Tibial artery (tissue), 4 donors: ENCODE measurements at regions of chr12 and their contacts with region 1.

Region 1: DNA sequence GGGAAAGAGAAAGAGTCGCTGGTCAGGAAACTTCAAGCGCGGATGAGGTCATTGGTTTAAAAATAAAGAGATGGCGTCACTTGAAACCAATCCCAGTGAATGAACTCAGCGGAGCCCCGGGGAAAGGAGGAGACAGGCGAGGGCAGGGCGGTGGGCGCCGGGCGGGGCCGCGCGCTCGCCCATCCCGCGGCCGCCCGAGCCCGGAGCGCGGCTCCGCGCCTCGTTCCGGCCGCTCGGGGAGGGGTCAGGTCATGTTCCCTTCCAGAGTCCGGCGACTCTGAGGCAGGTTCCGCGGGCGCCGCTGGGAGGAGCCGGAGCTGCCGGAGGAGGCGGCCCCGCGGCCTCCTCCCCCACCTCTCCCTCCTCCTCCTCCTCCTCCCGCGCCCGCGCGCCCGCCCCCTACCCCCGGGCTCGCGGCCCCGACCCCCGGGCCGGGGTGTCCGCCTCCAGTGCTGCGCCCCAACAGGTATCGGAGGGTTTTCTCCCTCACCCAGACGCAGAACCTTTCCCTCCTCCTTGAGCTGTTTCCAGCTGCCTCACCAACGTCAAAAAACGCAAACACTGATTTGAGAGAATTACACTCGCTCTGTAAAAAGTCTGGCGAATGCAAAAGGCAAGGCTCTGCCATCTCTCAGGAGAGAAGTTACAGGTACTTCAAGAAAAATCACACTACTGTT is at the start of gene DUSP16:
- DNase-seq: peak; percentile 91 to 96
- H3K4me3 ChIP-seq: peak within 1 kb of the TSS; percentile 70 to 89
- H3K27ac ChIP-seq: peak within 1 kb of the TSS; percentile 98 to 100
- H3K4me1 ChIP-seq: peaks cover 0 to 42% (median 21%) of the 10 kb centered on the region in 4 donors
- H3K27me3 ChIP-seq: no peaks in the 10 kb centered on the region
- CTCF ChIP-seq: no peak

Region 2: DNA sequence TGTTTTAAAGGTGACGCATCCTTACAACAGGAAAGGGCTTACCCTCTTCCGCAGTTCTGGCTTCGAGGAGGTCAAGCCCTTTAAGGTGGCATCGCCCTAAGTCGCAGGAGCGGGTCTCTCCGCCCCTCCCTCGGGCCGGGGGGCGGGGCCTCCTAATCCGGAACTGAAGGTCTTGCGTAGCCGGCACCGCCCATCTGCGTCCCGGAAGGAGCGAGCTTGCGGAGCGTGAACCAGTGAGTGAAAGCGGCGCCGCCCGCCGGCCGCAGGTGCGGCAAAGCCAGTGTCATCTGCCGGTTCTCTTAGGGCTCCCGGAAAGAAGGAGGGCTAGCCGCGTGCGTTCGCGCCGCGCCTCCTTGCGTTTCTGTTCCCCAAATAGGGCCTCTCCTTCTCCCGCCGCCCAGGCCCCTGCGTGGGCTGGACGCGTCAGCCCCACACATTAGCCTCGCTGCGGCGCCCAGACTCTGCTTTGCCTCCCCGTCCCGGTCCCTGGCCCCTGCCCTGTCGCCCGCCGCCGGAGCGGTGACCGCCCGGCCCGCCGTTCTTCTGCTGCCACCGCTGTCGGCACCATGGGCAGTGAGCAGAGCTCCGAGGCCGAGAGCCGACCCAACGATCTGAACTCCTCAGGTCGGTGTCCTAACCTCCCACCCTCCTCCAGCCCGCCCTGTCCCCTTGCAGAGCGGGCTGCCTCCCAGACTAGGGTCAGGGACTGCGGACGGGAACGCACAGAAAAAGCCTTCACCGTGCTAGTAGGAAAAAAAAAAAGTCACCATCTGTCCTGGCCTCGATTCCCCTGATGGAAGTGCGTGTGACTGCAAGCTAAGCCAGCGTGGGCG is 205.6 kb before region 1 on chr12 and contains the start of gene BORCS5:
- intact Hi-C with region 1: loop called (anchors 5 kb)
- DNase-seq: peak; percentile 96 to 98
- H3K4me3 ChIP-seq: peak within 1 kb of the TSS; percentile 76 to 80
- H3K27ac ChIP-seq: peak within 1 kb of the TSS; percentile 94 to 95
- H3K4me1 ChIP-seq: peaks cover 0 to 22% (median 9%) of the 10 kb centered on the region in 4 donors
- H3K27me3 ChIP-seq: no peaks in the 10 kb centered on the region
- CTCF ChIP-seq: no peak

Region 3: GRCh38 chr12:12376646-12377448 is 185.9 kb before region 1 on chr12:
- intact Hi-C with region 1: loop called (anchors 5 kb)
- DNase-seq: no peak
- H3K4me3 ChIP-seq: no peak overlapping the region
- H3K27ac ChIP-seq: no peak overlapping the region
- H3K4me1 ChIP-seq: peaks cover 0 to 18% (median 9%) of the 10 kb centered on the region in 4 donors
- H3K27me3 ChIP-seq: no peaks in the 10 kb centered on the region
- CTCF ChIP-seq: peak; percentile 66 to 86

Region 4: DNA sequence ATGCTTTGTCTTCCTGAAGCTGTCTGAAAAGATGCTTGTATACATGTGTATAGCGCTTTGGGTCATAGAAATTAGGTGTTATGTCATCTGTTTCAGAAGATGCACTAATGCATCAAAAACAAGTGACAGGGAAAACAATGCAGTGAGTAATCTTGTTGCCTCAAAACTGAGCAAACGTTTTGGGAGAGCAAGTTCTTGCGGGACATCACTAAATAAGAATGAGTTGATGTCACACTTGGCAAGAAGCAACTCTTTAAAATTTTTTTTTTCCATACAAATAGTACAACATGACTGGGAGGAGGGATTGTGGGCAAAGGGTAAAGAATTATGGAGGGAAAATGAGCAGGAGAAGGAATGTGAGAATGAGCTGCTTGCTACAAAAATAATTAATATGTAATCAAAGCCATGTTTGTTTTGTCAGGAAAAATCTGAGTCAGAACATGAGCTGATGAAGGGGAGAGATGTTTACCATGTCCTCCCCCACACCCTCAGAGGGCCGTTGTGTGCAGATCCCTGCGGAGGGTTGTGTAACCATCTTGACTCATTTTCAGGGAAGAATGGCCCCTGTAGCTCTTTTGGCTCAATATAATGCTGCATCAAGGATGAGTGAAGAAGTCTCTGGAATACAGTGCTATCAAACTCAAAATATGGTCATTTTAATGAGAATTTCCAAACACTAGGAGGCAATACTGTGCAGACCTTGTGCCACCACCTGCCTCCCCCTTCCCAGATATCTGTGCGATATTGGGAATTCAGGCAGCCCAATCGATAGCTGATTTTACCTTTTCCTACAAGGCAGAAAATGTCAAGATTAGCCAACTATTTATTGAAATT is 164.5 kb before region 1 on chr12:
- intact Hi-C with region 1: loop called (anchors 5 kb)
- DNase-seq: peak; percentile 81 to 83
- H3K4me3 ChIP-seq: peak overlapping the region in 1 of 2 donors; percentile 14
- H3K27ac ChIP-seq: peak overlapping the region; percentile 41 to 65
- H3K4me1 ChIP-seq: peaks cover 0 to 37% (median 16%) of the 10 kb centered on the region in 4 donors
- H3K27me3 ChIP-seq: no peaks in the 10 kb centered on the region
- CTCF ChIP-seq: no peak

Region 5: GRCh38 chr12:12606781-12607589 is 44.3 kb after region 1 on chr12:
- intact Hi-C with region 1: loop called (anchors 5 kb)
- DNase-seq: no peak
- H3K4me3 ChIP-seq: no peak overlapping the region
- H3K27ac ChIP-seq: no peak overlapping the region
- H3K4me1 ChIP-seq: peaks cover 0 to 7% (median 0%) of the 10 kb centered on the region in 4 donors
- H3K27me3 ChIP-seq: no peaks in the 10 kb centered on the region
- CTCF ChIP-seq: no peak

Region 6: GRCh38 chr12:12704593-12705230 is 142.0 kb after region 1 on chr12:
- intact Hi-C with region 1: loop called (anchors 10 kb)
- DNase-seq: peak in 1 of 2 donors; percentile 64
- H3K4me3 ChIP-seq: no peak overlapping the region
- H3K27ac ChIP-seq: peak overlapping the region in 1 of 2 donors; percentile 11
- H3K4me1 ChIP-seq: peaks cover 0 to 8% (median 2%) of the 10 kb centered on the region in 4 donors
- H3K27me3 ChIP-seq: no peaks in the 10 kb centered on the region
- CTCF ChIP-seq: peak; percentile 96 to 99